B cell (primary cell): ENCODE measurements at regions of chr17 and their contacts with region 1.

Region 1: DNA sequence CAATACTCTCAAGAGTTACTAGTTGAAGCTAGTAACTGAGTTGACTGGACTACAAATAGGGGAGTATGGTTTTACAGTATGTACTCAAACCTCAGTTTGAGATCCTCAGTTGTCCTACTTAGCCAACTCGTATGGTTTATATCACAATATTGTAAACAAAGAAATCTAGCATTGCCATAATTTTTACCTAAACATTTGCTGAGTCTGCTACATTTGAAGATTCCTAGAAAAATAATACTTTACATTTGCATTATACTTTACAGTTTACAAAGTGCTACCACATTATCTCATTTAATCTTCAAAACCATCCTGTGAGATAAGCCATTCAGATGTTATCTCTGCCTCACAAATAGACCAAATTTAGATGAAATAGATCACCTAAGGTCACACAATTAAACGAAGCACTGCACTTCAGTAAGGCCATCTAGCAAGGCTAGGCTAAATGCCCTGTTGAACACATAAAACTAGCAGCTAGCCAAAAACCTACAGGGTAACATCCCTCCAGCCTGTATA is 16.3 kb downstream of the CBX1 start:
- DNase-seq: no peak
- ATAC-seq: no peak
- H3K4me3 ChIP-seq: no peak overlapping the region
- H3K4me3 Mint-ChIP-seq: no peak overlapping the region
- H3K27ac ChIP-seq: no peak overlapping the region
- H3K27ac Mint-ChIP-seq: no peak overlapping the region
- H3K4me1 ChIP-seq: no peaks in the 10 kb centered on the region
- H3K4me1 Mint-ChIP-seq: peaks cover 3% of the 10 kb centered on the region
- H3K27me3 ChIP-seq: no peaks in the 10 kb centered on the region
- H3K27me3 Mint-ChIP-seq: no peaks in the 10 kb centered on the region
- CTCF ChIP-seq: no peak

Region 2: DNA sequence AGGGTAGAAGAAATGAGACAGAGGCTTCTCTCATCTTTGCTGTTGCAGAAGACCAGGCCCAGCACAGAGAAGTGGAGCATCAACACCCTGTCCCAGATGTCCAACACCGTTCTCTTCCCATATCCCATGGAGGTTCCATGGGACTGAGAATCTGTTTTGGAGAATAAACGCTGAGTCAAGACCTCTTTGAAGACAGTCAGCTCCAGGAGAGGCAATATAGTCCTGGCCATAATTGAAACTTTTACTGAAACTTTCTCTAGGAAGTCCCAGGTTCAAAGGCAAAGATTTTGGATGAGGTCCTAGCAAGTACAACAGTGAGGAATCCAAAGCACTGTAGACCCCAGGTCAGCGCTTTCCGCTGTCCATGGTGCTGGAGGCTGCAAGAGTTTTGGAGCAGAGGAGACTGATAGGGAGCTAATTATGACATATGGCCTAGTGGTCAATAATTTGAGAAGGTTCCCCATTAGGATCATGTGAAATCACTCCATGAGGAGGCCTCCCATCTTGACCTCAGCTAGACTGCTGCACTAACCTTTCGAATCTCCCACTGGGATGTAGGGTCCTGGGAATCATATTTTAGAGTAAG is 299.4 kb before region 1 on chr17:
- CTCF ChIA-PET with region 1: no interaction called
- POLR2A ChIA-PET with region 1: no interaction called
- intact Hi-C with region 1: no loop called
- DNase-seq: no peak
- ATAC-seq: no peak
- H3K4me3 ChIP-seq: no peak overlapping the region
- H3K4me3 Mint-ChIP-seq: no peak overlapping the region
- H3K27ac ChIP-seq: no peak overlapping the region
- H3K27ac Mint-ChIP-seq: no peak overlapping the region
- H3K4me1 ChIP-seq: peaks cover 10% of the 10 kb centered on the region in 2 donors
- H3K4me1 Mint-ChIP-seq: peaks cover 9% of the 10 kb centered on the region
- H3K27me3 ChIP-seq: peaks cover 0 to 23% (median 18%) of the 10 kb centered on the region in 4 experiments
- H3K27me3 Mint-ChIP-seq: peaks cover 65% of the 10 kb centered on the region
- CTCF ChIP-seq: no peak

Region 3: DNA sequence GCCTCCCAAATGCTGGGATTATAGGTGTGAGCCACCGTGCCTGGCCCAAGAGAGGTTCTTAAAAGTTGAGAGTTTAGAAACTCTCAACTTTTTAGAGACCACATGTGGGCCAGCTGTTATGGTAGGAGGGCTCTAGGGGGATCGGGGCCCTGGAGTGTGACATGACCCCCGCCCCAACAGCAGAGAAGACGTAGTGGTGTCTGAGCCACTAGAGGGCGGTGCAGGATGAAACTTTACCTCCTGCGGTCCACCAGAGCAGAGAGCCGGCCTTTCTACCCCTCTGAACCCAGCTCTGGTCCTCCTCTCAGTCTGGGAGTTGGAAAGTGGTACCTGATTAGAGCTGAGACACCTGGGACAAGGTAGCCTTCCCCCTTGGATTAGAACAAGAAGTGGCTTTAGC is 106.7 kb before region 1 on chr17:
- CTCF ChIA-PET with region 1: interaction called, 11 read pairs
- POLR2A ChIA-PET with region 1: no interaction called
- intact Hi-C with region 1: no loop called
- DNase-seq: peak; percentile 67
- ATAC-seq: peak; percentile 88
- H3K4me3 ChIP-seq: no peak overlapping the region
- H3K4me3 Mint-ChIP-seq: no peak overlapping the region
- H3K27ac ChIP-seq: no peak overlapping the region
- H3K27ac Mint-ChIP-seq: no peak overlapping the region
- H3K4me1 ChIP-seq: no peaks in the 10 kb centered on the region
- H3K4me1 Mint-ChIP-seq: peaks cover 2% of the 10 kb centered on the region
- H3K27me3 ChIP-seq: no peaks in the 10 kb centered on the region
- H3K27me3 Mint-ChIP-seq: no peaks in the 10 kb centered on the region
- CTCF ChIP-seq: peak; percentile 77

Region 4: GRCh38 chr17:48107168-48108132 is 22.5 kb after region 1 on chr17 and contains the start of gene SNX11:
- CTCF ChIA-PET with region 1: interaction called, 41 read pairs
- POLR2A ChIA-PET with region 1: no interaction called
- intact Hi-C with region 1: no loop called
- DNase-seq: peak; percentile 94
- ATAC-seq: peak; percentile 78
- H3K4me3 ChIP-seq: peak within 1 kb of the TSS; percentile 71 to 96 (median 79)
- H3K4me3 Mint-ChIP-seq: peak within 1 kb of the TSS; percentile 91
- H3K27ac ChIP-seq: peak within 1 kb of the TSS; percentile 88 to 94
- H3K27ac Mint-ChIP-seq: peak within 1 kb of the TSS; percentile 97
- H3K4me1 ChIP-seq: peaks cover 46 to 61% of the 10 kb centered on the region in 2 donors
- H3K4me1 Mint-ChIP-seq: peaks cover 58% of the 10 kb centered on the region
- H3K27me3 ChIP-seq: no peaks in the 10 kb centered on the region
- H3K27me3 Mint-ChIP-seq: no peaks in the 10 kb centered on the region
- CTCF ChIP-seq: no peak
- total RNA-seq, gene SNX11: 42.0 and 47.1 TPM in 2 replicates

Region 5: DNA sequence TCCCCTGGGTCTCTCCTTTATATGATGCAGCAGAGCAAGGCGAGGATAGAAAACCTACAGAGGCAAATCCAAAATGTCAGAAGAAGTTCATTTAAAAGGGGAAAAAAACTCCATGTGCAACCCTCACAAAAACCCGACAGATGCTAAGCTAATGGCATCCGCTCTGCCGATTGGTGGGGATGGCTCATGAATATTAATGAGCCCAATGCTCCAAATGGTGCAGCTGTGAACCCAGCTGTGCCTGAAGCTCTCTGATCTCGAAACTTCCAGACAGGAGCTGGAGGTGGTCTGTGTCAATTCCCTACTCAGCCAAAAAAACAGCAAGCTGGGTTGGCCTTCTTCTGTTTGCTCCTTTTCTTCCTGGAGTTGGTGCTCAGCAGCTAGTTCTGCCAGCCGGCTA is 38.1 kb after region 1 on chr17:
- CTCF ChIA-PET with region 1: interaction called, 237 read pairs
- POLR2A ChIA-PET with region 1: no interaction called
- intact Hi-C with region 1: no loop called
- DNase-seq: no peak
- ATAC-seq: no peak
- H3K4me3 ChIP-seq: no peak overlapping the region
- H3K4me3 Mint-ChIP-seq: no peak overlapping the region
- H3K27ac ChIP-seq: no peak overlapping the region
- H3K27ac Mint-ChIP-seq: no peak overlapping the region
- H3K4me1 ChIP-seq: no peaks in the 10 kb centered on the region
- H3K4me1 Mint-ChIP-seq: no peaks in the 10 kb centered on the region
- H3K27me3 ChIP-seq: no peaks in the 10 kb centered on the region
- H3K27me3 Mint-ChIP-seq: no peaks in the 10 kb centered on the region
- CTCF ChIP-seq: no peak

Region 6: GRCh38 chr17:48169926-48170325 is 84.9 kb after region 1 on chr17:
- CTCF ChIA-PET with region 1: no interaction called
- POLR2A ChIA-PET with region 1: no interaction called
- intact Hi-C with region 1: no loop called
- DNase-seq: no peak
- ATAC-seq: no peak
- H3K4me3 ChIP-seq: no peak overlapping the region
- H3K4me3 Mint-ChIP-seq: no peak overlapping the region
- H3K27ac ChIP-seq: no peak overlapping the region
- H3K27ac Mint-ChIP-seq: no peak overlapping the region
- H3K4me1 ChIP-seq: no peaks in the 10 kb centered on the region
- H3K4me1 Mint-ChIP-seq: no peaks in the 10 kb centered on the region
- H3K27me3 ChIP-seq: no peaks in the 10 kb centered on the region
- H3K27me3 Mint-ChIP-seq: no peaks in the 10 kb centered on the region
- CTCF ChIP-seq: no peak

Region 7: DNA sequence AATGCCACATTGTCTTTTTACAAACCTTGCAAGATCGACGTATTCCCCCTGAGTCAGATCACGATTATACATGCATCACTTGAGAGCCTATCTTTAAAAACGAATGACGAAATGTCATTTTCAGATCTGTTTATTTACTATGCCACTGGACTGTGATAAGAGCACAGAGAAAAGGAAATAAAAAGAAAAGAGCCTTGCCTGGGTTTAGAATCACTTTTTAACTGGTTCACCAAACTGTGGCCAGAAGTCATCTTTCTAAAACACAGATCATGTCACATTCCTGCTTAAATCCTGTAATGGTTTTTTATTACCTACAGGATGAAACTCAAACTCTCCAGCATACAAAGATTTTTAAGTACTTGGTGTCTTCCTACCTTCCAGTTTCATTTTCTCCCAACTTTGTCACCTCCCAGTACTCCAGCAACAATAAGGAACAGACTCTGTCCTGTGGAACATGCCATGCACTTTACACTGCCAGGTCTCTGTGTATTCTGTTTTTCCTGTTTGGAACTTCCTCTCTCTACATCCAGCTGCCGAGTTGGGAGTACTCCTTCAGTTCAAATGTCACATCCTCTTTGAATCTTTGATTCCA is 114.1 kb after region 1 on chr17:
- CTCF ChIA-PET with region 1: no interaction called
- POLR2A ChIA-PET with region 1: no interaction called
- intact Hi-C with region 1: no loop called
- DNase-seq: no peak
- ATAC-seq: no peak
- H3K4me3 ChIP-seq: no peak overlapping the region
- H3K4me3 Mint-ChIP-seq: no peak overlapping the region
- H3K27ac ChIP-seq: no peak overlapping the region
- H3K27ac Mint-ChIP-seq: no peak overlapping the region
- H3K4me1 ChIP-seq: no peaks in the 10 kb centered on the region
- H3K4me1 Mint-ChIP-seq: peaks cover 8% of the 10 kb centered on the region
- H3K27me3 ChIP-seq: no peaks in the 10 kb centered on the region
- H3K27me3 Mint-ChIP-seq: peaks cover under 1% of the 10 kb centered on the region
- CTCF ChIP-seq: no peak

Region 8: DNA sequence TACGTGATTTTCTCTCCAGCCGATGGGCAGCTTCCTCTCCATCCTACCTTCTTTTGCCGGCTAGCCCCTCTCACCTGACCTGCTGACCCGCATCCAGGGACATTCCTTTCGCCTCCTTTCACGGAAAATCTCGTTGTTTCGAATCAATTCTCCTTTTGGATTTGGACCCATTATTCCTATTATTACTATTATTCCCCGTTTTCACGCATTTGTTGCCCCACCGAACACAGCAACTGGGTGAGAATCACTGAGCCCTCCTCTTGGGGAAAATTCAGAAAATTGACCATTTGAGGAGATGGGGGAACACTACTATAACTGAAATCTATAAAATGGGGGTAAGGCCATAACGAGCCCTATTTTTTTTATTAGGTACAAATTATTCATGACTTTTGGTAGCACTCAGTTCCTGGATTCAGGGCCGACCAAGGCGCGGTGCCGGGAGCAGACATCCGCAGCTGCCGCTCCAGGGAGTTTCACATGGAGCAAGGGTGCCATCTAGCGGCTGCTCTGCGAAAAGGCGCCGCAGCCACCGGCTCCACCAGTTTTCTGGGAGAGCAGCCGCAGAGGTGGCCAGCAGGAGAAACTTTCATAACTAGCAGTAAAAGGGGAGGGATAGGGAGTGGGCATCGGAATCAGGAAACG is 533.4 kb after region 1 on chr17:
- CTCF ChIA-PET with region 1: interaction called, 4 read pairs
- POLR2A ChIA-PET with region 1: no interaction called
- intact Hi-C with region 1: loop called (anchors 1 kb)
- DNase-seq: peak; percentile 87
- ATAC-seq: peak; percentile 71
- H3K4me3 ChIP-seq: no peak overlapping the region
- H3K4me3 Mint-ChIP-seq: no peak overlapping the region
- H3K27ac ChIP-seq: no peak overlapping the region
- H3K27ac Mint-ChIP-seq: peak overlapping the region; percentile 74
- H3K4me1 ChIP-seq: peaks cover 33 to 51% of the 10 kb centered on the region in 2 donors
- H3K4me1 Mint-ChIP-seq: peaks cover 28% of the 10 kb centered on the region
- H3K27me3 ChIP-seq: peaks cover 0 to 97% (median 72%) of the 10 kb centered on the region in 4 experiments
- H3K27me3 Mint-ChIP-seq: peaks cover 86% of the 10 kb centered on the region
- CTCF ChIP-seq: peak; percentile 97